HepG2 (cell line): ENCODE measurements at regions of chr16 and their contacts with region 1.

Region 1: DNA sequence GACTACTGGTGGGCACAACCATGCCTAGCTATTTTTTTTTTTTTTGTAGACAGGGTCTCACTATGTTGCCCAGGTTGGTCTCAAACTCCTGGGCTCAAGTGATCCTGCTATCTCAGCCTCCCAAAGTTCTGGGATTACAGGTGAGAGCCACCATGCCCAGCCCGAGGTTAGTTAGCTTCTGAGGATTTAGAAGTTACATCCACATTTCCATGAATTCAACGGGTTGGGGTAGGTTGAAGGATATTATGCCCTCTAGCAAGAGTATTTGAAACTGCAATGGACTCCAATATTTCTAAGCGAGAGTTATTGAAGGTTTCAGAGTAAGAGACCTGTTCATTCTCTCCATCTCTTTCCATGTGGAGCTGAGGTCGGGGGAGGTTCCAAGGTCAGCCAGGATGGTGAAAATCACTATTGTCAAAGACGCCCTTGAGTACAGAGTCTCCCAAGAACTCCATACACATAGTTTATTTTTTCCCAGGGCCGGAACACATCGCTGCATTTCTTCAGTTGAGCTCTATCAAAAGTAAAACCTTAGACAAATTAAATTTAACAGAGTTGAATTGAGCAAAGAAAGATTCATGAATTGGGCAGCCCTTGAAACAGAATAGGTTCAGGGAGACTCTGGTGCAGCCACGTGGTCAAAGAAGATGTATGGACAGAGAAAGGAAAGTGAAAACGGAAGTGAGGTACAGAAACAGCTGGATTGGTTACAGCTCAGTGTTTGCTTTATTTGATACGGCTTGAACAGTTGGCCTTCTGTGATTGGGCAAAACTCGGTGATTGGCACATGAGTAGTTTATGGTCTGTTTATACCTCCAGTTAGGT is 19.0 kb upstream of the ITPRIPL2 start:
- DNase-seq: peak; percentile 88
- ATAC-seq: peak; percentile 83
- H3K4me3 ChIP-seq: peak overlapping the region in 1 of 3 experiments; percentile 3; a peak in 1 of 6 replicates
- H3K27ac ChIP-seq: no peak overlapping the region
- H3K4me1 ChIP-seq: peaks cover 40% of the 10 kb centered on the region
- H3K27me3 ChIP-seq: no peaks in the 10 kb centered on the region
- CTCF ChIP-seq: peak; percentile 45
- EP300 ChIP-seq: no peak
- POLR2A ChIP-seq: no peak
- RAD21 ChIP-seq: no peak

Region 2: GRCh38 chr16:18789850-18790724 is 304.7 kb before region 1 on chr16 and contains the start of gene RPS15A:
- CTCF ChIA-PET with region 1: no interaction called
- POLR2A ChIA-PET with region 1: interaction called, 10 read pairs
- in situ Hi-C with region 1: no loop called
- intact Hi-C with region 1: no loop called
- DNase-seq: peak; percentile 100
- ATAC-seq: peak; percentile 96
- H3K4me3 ChIP-seq: peak within 1 kb of the TSS; percentile 74 to 98 (median 96)
- H3K27ac ChIP-seq: peak within 1 kb of the TSS; percentile 78
- H3K4me1 ChIP-seq: peaks cover 62% of the 10 kb centered on the region
- H3K27me3 ChIP-seq: peaks cover 0 to 7% of the 10 kb centered on the region in 2 experiments; a peak in 1 of 5 replicates
- CTCF ChIP-seq: peak; percentile 3; the same call in 1 of the 2 replicates
- EP300 ChIP-seq: peak in 1 of 2 experiments; percentile 38; a peak in 2 of 4 replicates
- POLR2A ChIP-seq: peak; percentile 96 to 99
- RAD21 ChIP-seq: peak; percentile 43; the same call in 1 of the 2 replicates
- total RNA-seq, gene RPS15A: 5,489 and 6,421 TPM in 2 replicates

Region 3: DNA sequence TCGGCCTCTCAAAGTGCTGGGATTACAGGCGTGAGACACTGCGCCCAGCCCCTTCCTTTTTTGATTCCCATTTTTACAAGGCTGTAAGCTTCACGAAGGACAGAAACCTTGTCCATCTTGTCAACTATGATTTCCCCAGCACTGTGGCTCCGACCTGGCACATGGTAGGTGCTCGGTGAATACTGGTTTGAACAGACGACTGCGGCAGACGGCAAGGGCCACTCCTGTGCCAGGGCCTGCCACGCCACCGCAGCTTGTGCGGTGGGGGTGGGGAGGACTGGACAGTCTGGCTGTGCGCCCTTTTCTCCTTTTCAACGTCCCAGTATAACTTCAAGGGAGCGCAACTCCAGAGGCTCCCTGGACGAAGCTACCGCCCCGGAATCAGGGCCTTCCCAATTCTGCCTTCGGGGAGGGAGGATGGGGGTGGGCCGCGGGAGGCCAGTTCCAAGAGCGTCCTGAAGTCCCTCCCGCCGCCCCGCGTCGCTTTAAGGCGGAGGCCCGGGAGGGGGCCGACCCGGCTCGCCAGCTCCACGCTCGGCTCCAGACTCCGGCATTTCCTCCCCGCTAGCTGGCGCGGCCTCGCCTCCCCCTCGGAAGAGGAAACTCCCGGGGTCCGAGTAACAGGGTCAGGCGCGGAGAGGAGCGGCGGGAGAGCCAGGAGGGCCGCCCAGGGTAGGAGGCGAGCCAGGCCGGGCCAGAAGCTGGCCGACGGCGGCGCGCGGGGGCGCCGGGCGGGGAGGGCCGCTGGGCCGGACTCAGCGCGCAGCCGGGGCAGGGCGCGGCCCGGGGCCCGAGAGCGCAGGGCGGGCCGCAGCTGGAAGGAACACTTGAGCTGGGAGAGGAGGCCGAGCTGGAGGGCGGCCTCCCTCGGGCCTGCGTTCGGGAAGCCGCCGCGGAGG is 18.9 kb after region 1 on chr16 and contains the start of gene ITPRIPL2:
- CTCF ChIA-PET with region 1: no interaction called
- POLR2A ChIA-PET with region 1: interaction called, 239 read pairs
- in situ Hi-C with region 1: no loop called
- intact Hi-C with region 1: loop called (anchors 2 kb)
- DNase-seq: peak; percentile 67
- ATAC-seq: peak; percentile 78
- H3K4me3 ChIP-seq: peak within 1 kb of the TSS; percentile 73 to 88 (median 78)
- H3K27ac ChIP-seq: peak within 1 kb of the TSS; percentile 74
- H3K4me1 ChIP-seq: peaks cover 84% of the 10 kb centered on the region
- H3K27me3 ChIP-seq: no peaks in the 10 kb centered on the region
- CTCF ChIP-seq: no peak
- EP300 ChIP-seq: no peak
- POLR2A ChIP-seq: peak; percentile 77 to 79
- RAD21 ChIP-seq: peak; percentile 48
- total RNA-seq, gene ITPRIPL2: 11.7 and 12.6 TPM in 2 replicates

Region 4: GRCh38 chr16:19118938-19119431 is 24.2 kb after region 1 on chr16:
- CTCF ChIA-PET with region 1: no interaction called
- POLR2A ChIA-PET with region 1: interaction called, 239 read pairs
- in situ Hi-C with region 1: no loop called
- intact Hi-C with region 1: loop called (anchors 1 kb)
- DNase-seq: no peak
- ATAC-seq: no peak
- H3K4me3 ChIP-seq: no peak overlapping the region
- H3K27ac ChIP-seq: no peak overlapping the region
- H3K4me1 ChIP-seq: peaks cover 55% of the 10 kb centered on the region
- H3K27me3 ChIP-seq: no peaks in the 10 kb centered on the region
- CTCF ChIP-seq: no peak
- EP300 ChIP-seq: no peak
- POLR2A ChIP-seq: no peak
- RAD21 ChIP-seq: no peak